A673 (cell line): ENCODE measurements at regions of chr1 and their contacts with region 1.

Region 1: DNA sequence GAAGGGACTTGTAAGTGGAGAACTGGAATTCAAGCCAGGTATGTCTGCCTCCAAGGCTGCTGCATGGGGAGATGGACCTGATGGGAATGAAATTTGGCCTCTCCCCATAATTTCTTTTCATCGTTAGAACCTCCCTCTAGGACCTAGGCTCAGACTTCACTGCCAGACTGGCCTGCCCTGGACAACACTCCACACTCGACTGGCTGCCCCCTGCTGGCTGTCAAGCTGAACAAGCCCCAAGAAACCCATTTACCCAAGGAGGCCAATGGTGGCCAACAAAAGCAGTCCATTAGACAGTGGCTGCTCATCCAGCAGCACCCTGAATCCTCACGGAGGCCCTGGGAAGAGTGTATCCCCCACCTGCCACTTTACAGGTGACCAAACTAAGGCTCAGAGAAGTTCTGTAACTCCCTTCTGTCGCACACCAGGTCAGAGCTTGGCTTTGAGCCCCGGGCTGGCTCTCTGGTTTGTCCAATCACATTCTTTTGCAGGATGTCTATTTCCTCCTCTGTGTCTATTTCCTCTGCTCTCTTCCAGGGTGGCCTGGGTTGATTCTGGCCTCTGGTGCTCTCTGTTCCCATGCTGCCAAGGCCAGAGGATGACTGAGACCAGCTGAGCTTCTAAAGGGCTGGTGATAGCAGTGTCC is 3.8 kb downstream of the RNF186 start:
- DNase-seq: peak; percentile 70
- H3K4me3 ChIP-seq: no peak overlapping the region
- H3K27ac ChIP-seq: no peak overlapping the region
- H3K4me1 ChIP-seq: no peaks in the 10 kb centered on the region
- H3K27me3 ChIP-seq: no peaks in the 10 kb centered on the region
- CTCF ChIP-seq: peak; percentile 79

Region 2: GRCh38 chr1:18978706-18979105 is 832.6 kb before region 1 on chr1:
- CTCF ChIA-PET with region 1: no interaction called
- POLR2A ChIA-PET with region 1: no interaction called
- intact Hi-C with region 1: no loop called
- DNase-seq: no peak
- H3K4me3 ChIP-seq: no peak overlapping the region
- H3K27ac ChIP-seq: no peak overlapping the region
- H3K4me1 ChIP-seq: no peaks in the 10 kb centered on the region
- H3K27me3 ChIP-seq: no peaks in the 10 kb centered on the region
- CTCF ChIP-seq: no peak

Region 3: GRCh38 chr1:19715334-19716203 is 95.8 kb before region 1 on chr1:
- CTCF ChIA-PET with region 1: interaction called, 6 read pairs
- POLR2A ChIA-PET with region 1: no interaction called
- intact Hi-C with region 1: loop called (anchors 5 kb)
- DNase-seq: peak; percentile 98
- H3K4me3 ChIP-seq: no peak overlapping the region
- H3K27ac ChIP-seq: no peak overlapping the region
- H3K4me1 ChIP-seq: no peaks in the 10 kb centered on the region
- H3K27me3 ChIP-seq: no peaks in the 10 kb centered on the region
- CTCF ChIP-seq: peak; percentile 97

Region 4: DNA sequence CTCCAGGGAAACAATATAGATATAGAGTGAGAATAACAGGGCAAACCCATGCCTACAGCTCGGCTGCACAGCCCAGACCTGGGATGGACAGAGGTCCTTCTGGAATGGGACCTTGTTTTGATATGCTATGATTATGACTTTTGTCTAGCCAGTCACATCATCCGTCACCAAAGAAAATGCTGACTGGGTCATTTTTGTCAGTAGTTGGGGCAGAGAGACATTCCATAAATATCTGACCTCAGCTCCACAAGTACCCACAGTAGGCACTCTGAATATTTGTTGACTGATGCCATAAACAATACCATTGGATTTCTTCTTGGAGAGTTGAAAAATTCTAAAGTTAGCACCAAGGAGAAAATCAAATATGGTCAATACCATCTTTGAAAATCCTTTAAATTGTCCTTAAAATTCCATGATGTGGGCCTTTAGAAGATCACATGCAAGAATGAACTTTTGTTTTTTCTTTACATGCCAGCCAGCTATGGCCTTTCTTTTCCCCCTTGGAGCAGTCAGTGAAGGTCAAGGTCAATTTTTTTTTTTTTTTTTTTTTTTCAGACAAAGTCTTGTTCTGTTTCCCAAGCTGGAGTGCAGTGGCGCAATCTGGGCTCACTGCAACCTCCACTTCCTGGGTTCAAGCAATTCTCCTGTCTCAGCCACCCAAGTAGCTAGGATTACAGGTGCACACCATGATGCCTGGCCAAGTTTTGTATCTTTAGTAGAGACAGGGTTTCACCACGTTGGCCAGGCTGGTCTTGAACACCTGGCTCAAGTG is 18.9 kb before region 1 on chr1:
- CTCF ChIA-PET with region 1: no interaction called
- POLR2A ChIA-PET with region 1: no interaction called
- intact Hi-C with region 1: loop called (anchors 1 kb)
- DNase-seq: no peak
- H3K4me3 ChIP-seq: no peak overlapping the region
- H3K27ac ChIP-seq: no peak overlapping the region
- H3K4me1 ChIP-seq: no peaks in the 10 kb centered on the region
- H3K27me3 ChIP-seq: no peaks in the 10 kb centered on the region
- CTCF ChIP-seq: no peak